Activated CD4-positive, alpha-beta T cell treated with anti-CD3 and anti-CD28 coated beads for 36 hours (primary cell): ENCODE measurements at regions of chr16 and their contacts with region 1.

Region 1: GRCh38 chr16:79845033-79845733 is 244.6 kb upstream of the MAF start:
- DNase-seq: peak; percentile 47
- ATAC-seq: peak; percentile 45
- H3K4me3 Mint-ChIP-seq: no peak overlapping the region
- H3K27ac Mint-ChIP-seq: peak overlapping the region; percentile 74
- H3K4me1 Mint-ChIP-seq: peaks cover 32% of the 10 kb centered on the region
- H3K27me3 Mint-ChIP-seq: peaks cover 10% of the 10 kb centered on the region

Region 2: DNA sequence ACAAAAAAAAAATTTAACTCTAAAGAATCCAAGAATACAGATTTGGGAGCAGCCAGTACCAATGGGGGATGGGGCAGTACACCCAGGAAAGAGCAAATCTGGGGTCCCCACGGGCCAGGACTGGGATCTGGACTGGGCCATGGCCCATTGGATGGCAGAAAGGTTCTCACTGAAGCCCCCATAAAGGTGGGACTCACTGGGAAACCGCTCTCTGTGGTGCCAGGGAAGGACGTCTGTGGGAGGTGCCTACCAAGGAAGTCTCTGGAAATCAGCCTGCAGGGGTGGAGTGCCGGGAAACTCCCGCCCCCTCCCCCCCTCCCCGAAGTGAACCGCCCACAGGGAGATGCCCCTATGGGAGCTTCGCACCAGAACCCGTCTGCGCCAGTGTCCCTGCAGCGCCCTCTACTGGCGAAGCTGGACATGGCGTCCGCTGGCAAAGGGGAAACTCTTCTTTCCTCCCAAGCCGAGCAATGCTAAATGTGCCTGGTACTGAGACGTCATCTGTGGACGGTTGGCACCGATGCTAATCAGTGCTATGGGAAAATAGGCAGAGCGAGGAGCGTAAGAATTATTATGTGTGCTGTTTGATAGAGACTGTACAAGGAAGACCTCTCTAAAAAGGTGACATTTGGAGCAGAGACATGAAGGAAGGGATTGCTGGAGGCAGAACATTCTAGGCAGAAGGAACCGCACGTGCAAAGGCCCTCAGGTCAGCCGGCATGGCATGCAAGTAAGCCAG is 1074.7 kb before region 1 on chr16:
- CTCF ChIA-PET with region 1: no interaction called
- POLR2A ChIA-PET with region 1: no interaction called
- intact Hi-C with region 1: loop called (anchors 5 to 10 kb)
- DNase-seq: peak; percentile 90
- ATAC-seq: peak; percentile 23
- H3K4me3 Mint-ChIP-seq: peak overlapping the region; percentile 20
- H3K27ac Mint-ChIP-seq: peak overlapping the region; percentile 79
- H3K4me1 Mint-ChIP-seq: peaks cover 57% of the 10 kb centered on the region
- H3K27me3 Mint-ChIP-seq: peaks cover 6% of the 10 kb centered on the region

Region 3: DNA sequence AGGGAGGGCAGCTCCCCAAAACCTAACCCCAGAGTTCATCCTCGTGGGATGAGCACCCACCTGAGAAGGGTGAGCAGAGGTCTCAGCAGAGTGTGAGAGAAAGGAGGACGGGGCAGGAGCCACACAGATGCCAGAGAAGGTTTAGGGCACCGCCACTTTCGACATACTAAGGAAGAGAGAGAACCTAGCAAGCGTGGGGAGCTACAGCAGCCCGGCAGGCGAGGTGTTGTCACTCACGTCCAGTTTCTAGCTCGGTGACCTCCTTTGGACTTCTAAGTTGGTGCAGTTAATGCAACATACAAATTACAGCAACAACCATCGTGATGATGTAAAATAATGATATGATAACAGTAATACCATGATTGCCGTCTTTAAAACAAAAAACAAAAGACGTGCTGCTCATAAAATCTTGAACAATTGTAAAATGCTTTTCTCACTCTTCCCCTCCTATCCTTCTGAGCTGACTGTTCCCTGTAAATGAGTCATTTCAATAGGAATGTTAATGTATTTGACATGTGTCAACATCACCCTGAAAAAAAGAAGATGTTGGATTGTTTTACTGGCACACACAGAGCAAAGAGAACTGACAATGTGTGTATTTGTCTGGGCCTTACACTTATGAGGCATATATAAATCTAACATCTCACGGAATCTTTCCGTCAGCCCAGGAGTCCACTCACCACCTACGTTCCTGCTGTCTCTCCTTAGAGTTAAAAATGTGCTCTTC is 86.4 kb before region 1 on chr16:
- CTCF ChIA-PET with region 1: no interaction called
- POLR2A ChIA-PET with region 1: no interaction called
- intact Hi-C with region 1: loop called (anchors 1 kb)
- DNase-seq: no peak
- ATAC-seq: no peak
- H3K4me3 Mint-ChIP-seq: no peak overlapping the region
- H3K27ac Mint-ChIP-seq: no peak overlapping the region
- H3K4me1 Mint-ChIP-seq: peaks cover 37% of the 10 kb centered on the region
- H3K27me3 Mint-ChIP-seq: peaks cover 9% of the 10 kb centered on the region

Region 4: GRCh38 chr16:79805621-79806020 is 39.6 kb before region 1 on chr16:
- CTCF ChIA-PET with region 1: no interaction called
- POLR2A ChIA-PET with region 1: no interaction called
- intact Hi-C with region 1: no loop called
- DNase-seq: no peak
- ATAC-seq: no peak
- H3K4me3 Mint-ChIP-seq: no peak overlapping the region
- H3K27ac Mint-ChIP-seq: no peak overlapping the region
- H3K4me1 Mint-ChIP-seq: no peaks in the 10 kb centered on the region
- H3K27me3 Mint-ChIP-seq: peaks cover 10% of the 10 kb centered on the region

Region 5: DNA sequence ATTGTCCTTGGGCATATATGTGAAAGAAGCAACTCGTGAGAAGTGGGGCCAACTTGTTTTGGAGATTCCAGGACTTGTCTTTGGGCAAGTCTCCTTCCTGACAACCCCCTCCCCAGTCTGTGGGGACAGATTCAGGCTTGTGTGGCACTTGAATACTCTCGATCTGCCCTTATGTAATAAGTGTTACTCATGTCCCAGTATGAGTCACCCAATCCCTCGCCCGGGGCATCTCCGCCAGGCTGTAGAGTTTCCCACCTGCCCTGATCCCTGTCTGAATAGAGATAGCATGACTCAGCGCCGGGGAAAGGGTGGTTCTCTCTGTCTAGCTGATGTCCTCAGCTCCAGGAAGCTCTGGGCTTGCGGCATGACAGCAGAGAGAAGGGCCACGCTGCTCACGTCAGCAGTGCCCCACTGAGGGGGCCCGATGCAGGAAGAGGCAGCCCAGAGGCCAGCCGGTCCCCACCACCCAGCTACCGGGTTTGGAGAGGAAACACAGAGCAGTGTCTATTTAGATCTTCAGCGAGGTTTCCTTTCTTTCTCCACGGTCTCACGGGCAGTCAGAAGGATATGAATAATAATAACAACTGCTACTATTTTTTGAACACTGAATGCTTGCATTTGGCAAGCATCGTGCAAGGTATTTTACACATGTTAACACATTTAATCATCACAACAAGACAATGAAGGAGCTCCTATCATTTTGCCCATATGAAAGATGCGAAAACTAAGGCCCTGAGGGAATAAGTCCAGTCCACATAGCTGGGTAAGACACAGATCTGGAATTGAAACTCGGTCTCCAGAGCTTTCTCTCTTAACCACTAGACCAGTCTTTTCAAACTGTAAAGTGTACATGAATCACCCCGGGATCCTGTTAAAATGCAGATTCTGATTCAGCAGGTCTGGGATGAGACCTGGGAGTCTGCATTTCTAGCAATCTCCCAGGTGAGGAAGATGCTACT is 182.1 kb after region 1 on chr16:
- CTCF ChIA-PET with region 1: no interaction called
- POLR2A ChIA-PET with region 1: interaction called, 6 read pairs
- intact Hi-C with region 1: loop called in 1 of 2 experiments (anchors 1 kb)
- DNase-seq: peak; percentile 81
- ATAC-seq: peak; percentile 97
- H3K4me3 Mint-ChIP-seq: peak overlapping the region; percentile 18
- H3K27ac Mint-ChIP-seq: peak overlapping the region; percentile 53
- H3K4me1 Mint-ChIP-seq: peaks cover 9% of the 10 kb centered on the region
- H3K27me3 Mint-ChIP-seq: peaks cover 5% of the 10 kb centered on the region

Region 6: DNA sequence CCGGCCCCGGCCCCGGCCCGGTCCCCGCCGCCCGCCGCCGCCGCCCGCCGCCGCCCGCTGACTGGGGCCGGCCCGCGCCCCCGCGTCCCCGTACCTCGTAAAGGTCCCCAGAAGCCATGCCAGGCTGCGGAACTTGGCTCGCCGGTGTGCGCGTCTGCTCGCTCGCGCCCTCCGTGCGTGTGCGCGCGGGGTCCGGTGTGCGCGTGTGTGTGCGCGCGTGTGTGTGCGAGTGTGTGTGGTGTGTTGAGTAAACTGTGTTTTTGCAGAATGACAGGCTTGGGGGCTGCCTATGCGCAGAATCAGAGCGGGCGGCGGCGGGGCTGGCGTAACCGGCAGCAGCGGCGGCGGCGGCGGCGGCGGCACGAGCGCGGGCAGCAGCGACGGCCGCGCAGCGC is 958.9 kb after region 1 on chr16:
- CTCF ChIA-PET with region 1: no interaction called
- POLR2A ChIA-PET with region 1: no interaction called
- intact Hi-C with region 1: loop called in 1 of 2 experiments (anchors 10 kb)
- DNase-seq: peak; percentile 81
- ATAC-seq: peak; percentile 48
- H3K4me3 Mint-ChIP-seq: peak overlapping the region; percentile 84
- H3K27ac Mint-ChIP-seq: peak overlapping the region; percentile 89
- H3K4me1 Mint-ChIP-seq: peaks cover 32% of the 10 kb centered on the region
- H3K27me3 Mint-ChIP-seq: no peaks in the 10 kb centered on the region